ENCODE measurements at regions of chr7 and their contacts with region 1.

Region 1: GRCh38 chr7:64618785-64619456 is 47.0 kb upstream of the ZNF107 start:
- DNase-seq: peak; percentile 11 to 46
- H3K4me3 ChIP-seq: no peak overlapping the region
- H3K27ac ChIP-seq: no peak overlapping the region
- H3K4me1 ChIP-seq: no peaks in the 10 kb centered on the region
- H3K27me3 ChIP-seq: no peaks in the 10 kb centered on the region
- CTCF ChIP-seq: peak; percentile 84

Region 2: GRCh38 chr7:64183126-64183742 is 435.7 kb before region 1 on chr7:
- CTCF ChIA-PET with region 1: no interaction called
- POLR2A ChIA-PET with region 1: no interaction called
- intact Hi-C with region 1: loop called (anchors 5 kb)
- DNase-seq: peak in 1 of 2 experiments; percentile 7
- H3K4me3 ChIP-seq: no peak overlapping the region
- H3K27ac ChIP-seq: no peak overlapping the region
- H3K4me1 ChIP-seq: no peaks in the 10 kb centered on the region
- H3K27me3 ChIP-seq: no peaks in the 10 kb centered on the region
- CTCF ChIP-seq: peak; percentile 74

Region 3: GRCh38 chr7:64604106-64604505 is 14.8 kb before region 1 on chr7:
- CTCF ChIA-PET with region 1: no interaction called
- POLR2A ChIA-PET with region 1: no interaction called
- intact Hi-C with region 1: no loop called
- DNase-seq: no peak
- H3K4me3 ChIP-seq: no peak overlapping the region
- H3K27ac ChIP-seq: no peak overlapping the region
- H3K4me1 ChIP-seq: no peaks in the 10 kb centered on the region
- H3K27me3 ChIP-seq: no peaks in the 10 kb centered on the region
- CTCF ChIP-seq: no peak